ENCODE measurements at regions of chr5 and their contacts with region 1.

Region 1: GRCh38 chr5:132386644-132387286 is 17.3 kb downstream of the SLC22A5 start:
- DNase-seq: peak; percentile 87
- ATAC-seq: peak; percentile 93
- H3K4me3 Mint-ChIP-seq: no peak overlapping the region
- H3K27ac Mint-ChIP-seq: peak overlapping the region; percentile 51
- H3K4me1 Mint-ChIP-seq: peaks cover 57% of the 10 kb centered on the region
- H3K27me3 Mint-ChIP-seq: no peaks in the 10 kb centered on the region

Region 2: GRCh38 chr5:132479111-132479951 is 92.6 kb after region 1 on chr5:
- CTCF ChIA-PET with region 1: interaction called, 16 read pairs
- POLR2A ChIA-PET with region 1: interaction called, 5 read pairs
- DNase-seq: no peak
- ATAC-seq: no peak
- H3K4me3 Mint-ChIP-seq: no peak overlapping the region
- H3K27ac Mint-ChIP-seq: peak overlapping the region; percentile 80
- H3K4me1 Mint-ChIP-seq: peaks cover 83% of the 10 kb centered on the region
- H3K27me3 Mint-ChIP-seq: no peaks in the 10 kb centered on the region

Region 3: DNA sequence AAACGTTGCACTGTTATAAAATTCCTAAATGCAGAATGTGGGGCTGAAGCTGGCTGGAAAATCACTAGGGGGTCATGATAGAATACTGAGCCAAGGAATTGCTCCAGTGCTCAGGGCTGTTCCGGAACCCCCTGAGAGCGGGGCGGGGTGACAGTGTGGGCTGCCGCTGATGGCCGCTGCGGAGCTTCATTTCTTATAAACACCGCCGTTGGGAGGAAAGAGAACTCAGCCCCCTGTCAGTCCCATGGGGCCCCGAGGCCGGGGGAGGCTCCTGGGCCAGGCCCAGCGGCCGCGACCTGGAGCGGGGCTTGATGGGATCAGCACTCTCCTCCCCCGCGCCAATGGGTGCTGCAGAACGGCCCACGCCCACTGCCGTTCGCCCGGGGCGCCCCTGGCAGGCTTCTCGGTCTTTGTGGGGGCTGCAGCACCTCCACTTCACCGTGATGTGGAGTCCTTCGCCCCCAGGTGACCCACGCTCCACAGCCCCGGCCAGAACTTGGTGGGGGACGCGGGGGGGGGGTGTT is 109.0 kb after region 1 on chr5:
- CTCF ChIA-PET with region 1: interaction called, 400 read pairs
- POLR2A ChIA-PET with region 1: interaction called, 53 read pairs
- DNase-seq: peak; percentile 87
- ATAC-seq: peak; percentile 59
- H3K4me3 Mint-ChIP-seq: peak overlapping the region; percentile 83
- H3K27ac Mint-ChIP-seq: peak overlapping the region; percentile 95
- H3K4me1 Mint-ChIP-seq: peaks cover 77% of the 10 kb centered on the region
- H3K27me3 Mint-ChIP-seq: no peaks in the 10 kb centered on the region

Region 4: DNA sequence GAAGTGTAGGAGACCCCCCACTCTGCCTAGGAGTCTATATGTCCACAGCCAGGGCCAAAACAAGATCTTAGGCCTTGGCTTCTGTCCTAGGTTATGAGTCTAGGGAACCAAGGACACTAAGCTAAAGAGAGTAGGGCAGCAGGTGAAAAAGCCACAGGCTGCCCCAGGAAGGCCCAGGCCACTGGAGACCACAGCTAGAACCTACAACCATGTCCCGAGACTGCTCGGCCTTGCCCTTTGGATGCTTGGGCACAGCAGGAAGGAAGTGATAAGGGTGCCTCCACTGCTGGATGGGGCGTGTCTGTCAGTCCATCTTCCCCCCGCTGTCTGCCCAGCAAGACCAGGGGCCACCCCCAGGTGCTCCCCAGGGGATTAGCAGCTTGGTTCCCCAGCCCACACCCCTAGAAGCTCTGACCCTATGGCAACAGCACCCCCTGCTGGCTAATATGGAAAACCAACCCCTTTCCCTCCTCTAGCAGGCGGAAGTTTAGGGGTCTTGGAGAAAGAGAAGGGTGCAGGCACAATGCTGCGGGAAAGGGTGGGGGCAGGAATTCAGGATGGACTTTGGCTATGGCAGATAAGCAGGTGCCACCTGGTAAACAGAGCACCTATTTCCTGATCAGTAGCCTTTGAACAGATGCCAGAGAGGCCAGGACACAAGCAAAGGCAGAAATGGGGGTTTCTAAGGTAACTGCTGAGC is 114.3 kb after region 1 on chr5:
- CTCF ChIA-PET with region 1: interaction called, 400 read pairs
- POLR2A ChIA-PET with region 1: interaction called, 44 read pairs
- DNase-seq: peak; percentile 85
- ATAC-seq: peak; percentile 25
- H3K4me3 Mint-ChIP-seq: no peak overlapping the region
- H3K27ac Mint-ChIP-seq: peak overlapping the region; percentile 81
- H3K4me1 Mint-ChIP-seq: peaks cover 45% of the 10 kb centered on the region
- H3K27me3 Mint-ChIP-seq: peaks cover 5% of the 10 kb centered on the region

Region 5: DNA sequence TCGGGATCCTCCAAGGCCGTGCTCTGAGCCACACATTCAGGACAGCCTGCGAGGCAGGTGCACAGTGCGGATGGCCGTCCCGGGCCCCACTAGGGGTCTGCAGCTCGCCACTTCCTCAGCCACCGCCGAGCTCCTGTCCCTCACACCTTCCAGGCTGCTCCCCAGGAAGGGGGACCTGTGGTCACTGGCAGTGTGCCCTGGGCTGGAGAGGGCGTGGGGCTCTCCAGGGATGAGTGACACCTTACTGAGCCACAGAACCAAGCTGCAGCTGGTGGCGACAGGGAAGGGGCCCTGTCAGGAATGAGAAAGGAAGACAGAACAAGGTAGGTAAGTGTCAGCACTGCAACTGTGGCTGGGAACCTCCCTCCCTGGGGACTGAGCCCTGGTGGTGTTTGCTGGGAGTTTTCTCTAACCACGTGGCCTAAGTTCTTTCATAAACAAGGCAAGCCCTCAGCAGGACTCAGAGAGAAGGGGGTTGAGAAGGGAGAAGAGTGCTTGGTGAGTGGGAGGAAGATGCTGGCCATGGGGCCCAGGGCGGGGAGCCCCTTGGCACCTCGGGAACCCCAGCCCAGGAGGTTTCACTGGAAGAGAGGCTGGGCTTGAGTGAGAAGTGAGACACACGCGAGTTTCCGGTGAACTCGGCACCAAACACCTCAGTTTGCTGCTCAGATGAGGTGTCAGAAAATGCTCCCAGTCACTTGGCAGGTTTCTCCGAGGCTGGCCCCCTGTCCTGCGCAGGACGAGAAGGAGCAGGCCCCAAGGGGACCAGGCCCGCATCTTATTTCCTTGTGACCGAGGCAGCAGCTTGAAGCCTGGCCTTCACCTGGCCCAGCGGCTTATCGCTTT is 276.4 kb after region 1 on chr5:
- CTCF ChIA-PET with region 1: no interaction called
- POLR2A ChIA-PET with region 1: no interaction called
- DNase-seq: peak; percentile 43
- ATAC-seq: peak; percentile 56
- H3K4me3 Mint-ChIP-seq: no peak overlapping the region
- H3K27ac Mint-ChIP-seq: peak overlapping the region; percentile 84
- H3K4me1 Mint-ChIP-seq: peaks cover 51% of the 10 kb centered on the region
- H3K27me3 Mint-ChIP-seq: no peaks in the 10 kb centered on the region

Measured in activated CD8-positive, alpha-beta T cell treated with anti-CD3 and anti-CD28 coated beads, Interleukin-2, amount 10 ng/mL, durations not matched to agents 7 days and 5 days (primary cell).